Posterior cingulate gyrus (tissue), 11 donors: ENCODE measurements at regions of chr20 and their contacts with region 1.

Region 1: GRCh38 chr20:25195014-25195961 is at the start of gene ENTPD6:
- DNase-seq: peak; percentile 87 to 99 (median 90)

Region 2: GRCh38 chr20:24738981-24739633 is 456.2 kb before region 1 on chr20:
- intact Hi-C with region 1: no loop called
- DNase-seq: no peak

Region 3: GRCh38 chr20:25247956-25248785 is 52.9 kb after region 1 on chr20 and contains the start of gene PYGB:
- intact Hi-C with region 1: loop called (anchors 1 kb)
- DNase-seq: peak; percentile 70 to 97 (median 78)

Region 4: GRCh38 chr20:25390538-25391528 is 195.5 kb after region 1 on chr20 and contains the start of gene ABHD12:
- intact Hi-C with region 1: loop called (anchors 5 kb)
- DNase-seq: peak; percentile 92 to 99 (median 96)

Region 5: GRCh38 chr20:25407311-25408169 is 212.3 kb after region 1 on chr20 and contains the start of gene GINS1:
- intact Hi-C with region 1: loop called (anchors 5 kb)
- DNase-seq: peak; percentile 80 to 98 (median 88)